ENCODE measurements at regions of chr2 and their contacts with region 1.

Region 1: DNA sequence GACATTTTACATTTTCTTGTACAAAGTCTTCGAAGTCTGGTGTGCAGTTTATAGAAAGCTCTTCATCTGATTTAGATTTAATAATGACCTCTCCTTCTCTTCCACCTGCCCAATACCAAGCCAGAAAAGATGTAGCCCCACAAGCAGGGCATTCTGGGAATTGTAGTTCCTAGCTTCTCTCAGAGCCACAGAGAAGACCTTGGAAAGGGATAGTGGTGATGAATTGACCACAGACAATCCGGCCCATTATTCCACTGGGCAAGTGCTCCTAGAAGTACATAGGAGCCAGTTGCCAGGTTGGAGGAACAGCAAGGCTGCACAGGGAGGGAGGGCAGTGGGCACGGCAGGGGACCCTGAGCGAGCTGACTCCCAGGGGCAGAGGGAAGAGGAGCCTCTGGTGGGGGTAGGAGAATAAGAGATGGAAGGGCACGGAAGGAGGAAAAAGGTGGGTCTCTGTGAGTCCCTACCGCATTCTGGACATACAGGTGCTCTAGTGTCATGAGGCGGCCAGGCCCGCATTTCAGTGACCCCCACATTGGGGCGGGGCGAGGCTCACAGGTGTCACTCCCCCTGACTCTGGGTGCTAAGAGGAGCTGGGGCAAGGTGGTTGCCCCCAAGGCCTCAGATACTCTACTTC is 152.5 kb upstream of the HAAO start:
- DNase-seq: no peak
- H3K4me3 ChIP-seq: no peak overlapping the region
- H3K27ac ChIP-seq: no peak overlapping the region
- H3K4me1 ChIP-seq: peaks cover 9 to 18% (median 16%) of the 10 kb centered on the region in 4 donors
- H3K27me3 ChIP-seq: no peaks in the 10 kb centered on the region
- CTCF ChIP-seq: no peak
- EP300 ChIP-seq: no peak
- POLR2A ChIP-seq: no peak

Region 2: DNA sequence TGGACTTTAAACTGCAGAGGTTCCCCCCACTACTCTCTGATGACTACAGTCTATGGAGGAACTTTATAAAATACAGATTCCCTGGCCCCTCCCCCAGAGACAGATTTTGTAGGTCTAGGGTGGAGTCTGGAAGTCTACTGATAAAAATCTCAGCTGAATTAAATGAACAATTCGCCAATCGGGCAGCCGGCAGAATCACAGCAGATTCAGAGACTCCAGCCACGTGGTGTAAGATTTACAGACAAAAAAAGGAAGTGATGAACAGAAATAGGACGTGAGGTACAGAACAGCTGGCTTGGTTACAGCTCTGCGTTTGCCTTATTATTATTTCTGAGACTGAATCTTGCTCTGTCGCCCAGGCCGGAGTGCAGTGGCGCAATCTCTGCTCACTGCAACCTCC is 397.9 kb before region 1 on chr2:
- intact Hi-C with region 1: no loop called
- DNase-seq: no peak
- H3K4me3 ChIP-seq: no peak overlapping the region
- H3K27ac ChIP-seq: no peak overlapping the region
- H3K4me1 ChIP-seq: no peaks in the 10 kb centered on the region
- H3K27me3 ChIP-seq: no peaks in the 10 kb centered on the region
- CTCF ChIP-seq: no peak
- EP300 ChIP-seq: no peak
- POLR2A ChIP-seq: no peak

Region 3: DNA sequence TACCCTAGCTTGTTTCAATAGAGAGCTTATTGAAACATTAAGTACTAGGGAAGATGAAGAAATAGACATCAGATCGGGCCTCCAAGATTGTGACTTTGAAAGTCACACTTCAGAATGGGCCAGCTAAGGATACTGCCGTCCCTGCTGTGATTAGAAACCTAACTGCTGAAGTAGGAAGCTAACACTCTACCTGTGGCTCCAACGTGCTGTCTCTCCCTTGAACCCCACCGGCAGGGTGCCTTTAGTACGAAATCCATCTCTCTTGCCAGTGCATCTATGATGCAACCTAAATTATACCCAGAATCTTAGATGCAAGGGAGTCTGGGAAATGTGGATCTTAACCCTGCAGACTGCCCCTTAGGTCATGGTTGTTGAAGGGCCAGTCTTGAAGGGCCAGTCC is 259.6 kb before region 1 on chr2:
- intact Hi-C with region 1: no loop called
- DNase-seq: no peak
- H3K4me3 ChIP-seq: no peak overlapping the region
- H3K27ac ChIP-seq: no peak overlapping the region
- H3K4me1 ChIP-seq: no peaks in the 10 kb centered on the region
- H3K27me3 ChIP-seq: no peaks in the 10 kb centered on the region
- CTCF ChIP-seq: no peak
- EP300 ChIP-seq: no peak
- POLR2A ChIP-seq: no peak

Region 4: GRCh38 chr2:42792583-42793333 is 152.1 kb before region 1 on chr2 and contains the start of gene HAAO:
- intact Hi-C with region 1: no loop called
- DNase-seq: no peak
- H3K4me3 ChIP-seq: peak within 1 kb of the TSS; percentile 63 to 79 (median 68)
- H3K27ac ChIP-seq: peak within 1 kb of the TSS; percentile 82 to 94 (median 90)
- H3K4me1 ChIP-seq: peaks cover 3 to 54% (median 44%) of the 10 kb centered on the region in 4 donors
- H3K27me3 ChIP-seq: no peaks in the 10 kb centered on the region
- CTCF ChIP-seq: peak in 2 of 3 experiments; percentile 20 to 22
- EP300 ChIP-seq: no peak
- POLR2A ChIP-seq: no peak
- total RNA-seq, gene HAAO: 2.9 to 4.8 (median 4.0) TPM

Region 5: GRCh38 chr2:42859006-42859552 is 85.8 kb before region 1 on chr2:
- intact Hi-C with region 1: loop called (anchors 5 kb)
- DNase-seq: no peak
- H3K4me3 ChIP-seq: no peak overlapping the region
- H3K27ac ChIP-seq: peak overlapping the region in 1 of 4 donors; percentile 17
- H3K4me1 ChIP-seq: peaks cover 6 to 18% (median 17%) of the 10 kb centered on the region in 4 donors
- H3K27me3 ChIP-seq: no peaks in the 10 kb centered on the region
- CTCF ChIP-seq: peak; percentile 91 to 95 (median 93)
- EP300 ChIP-seq: no peak
- POLR2A ChIP-seq: no peak

Region 6: GRCh38 chr2:43542285-43542937 is 597.5 kb after region 1 on chr2:
- intact Hi-C with region 1: loop called (anchors 5 kb)
- DNase-seq: no peak
- H3K4me3 ChIP-seq: no peak overlapping the region
- H3K27ac ChIP-seq: no peak overlapping the region
- H3K4me1 ChIP-seq: peaks cover 3 to 34% (median 24%) of the 10 kb centered on the region in 4 donors
- H3K27me3 ChIP-seq: no peaks in the 10 kb centered on the region
- CTCF ChIP-seq: peak; percentile 58 to 71 (median 65)
- EP300 ChIP-seq: no peak
- POLR2A ChIP-seq: no peak